ENCODE measurements at regions of chr17 and their contacts with region 1.

Region 1: DNA sequence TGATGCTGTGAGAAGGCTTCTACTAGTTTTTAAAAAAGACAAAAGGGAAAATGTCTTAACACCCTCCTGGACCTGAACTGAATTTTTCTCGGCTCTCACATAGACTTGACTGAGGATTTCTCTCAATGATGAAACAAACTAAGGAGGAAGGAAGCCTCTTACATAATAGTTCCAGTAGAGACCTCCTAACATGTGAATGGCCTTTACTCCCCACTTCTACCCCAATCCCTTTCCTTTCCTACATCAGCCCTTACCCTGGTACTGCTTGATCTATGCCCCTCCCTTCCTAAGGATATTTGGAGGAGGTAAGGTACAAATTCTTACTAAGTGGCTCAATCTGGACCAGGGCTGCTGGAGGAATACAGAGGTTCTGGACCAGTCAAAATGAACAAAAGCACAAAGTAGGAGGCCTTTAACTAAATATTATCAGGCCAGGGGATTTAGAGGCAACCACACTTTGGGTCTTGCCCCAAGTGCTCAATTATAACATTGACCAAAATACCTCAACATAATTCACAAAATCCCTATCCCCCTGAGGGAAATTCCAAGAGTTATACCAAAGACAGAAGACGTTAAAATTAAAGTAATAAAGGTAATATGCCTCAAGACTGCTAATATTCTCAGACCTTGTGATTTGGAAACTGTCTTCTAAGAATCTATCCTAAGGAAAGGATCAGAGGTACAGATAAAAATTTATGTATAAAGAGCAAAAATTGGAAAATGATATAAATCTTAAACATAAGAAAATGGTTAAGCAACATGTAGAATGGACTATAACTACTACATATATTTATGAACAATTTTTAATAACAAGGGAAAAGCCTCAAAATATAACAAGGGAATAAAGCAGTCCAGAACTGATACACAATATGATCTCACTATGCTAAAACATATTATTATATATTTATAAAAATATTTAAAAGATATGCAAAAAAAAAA is 55.1 kb upstream of the MTMR4 start:
- DNase-seq: no peak
- ATAC-seq: no peak
- H3K4me3 ChIP-seq: no peak overlapping the region
- H3K27ac ChIP-seq: no peak overlapping the region
- H3K4me1 ChIP-seq: no peaks in the 10 kb centered on the region
- H3K27me3 ChIP-seq: no peaks in the 10 kb centered on the region
- CTCF ChIP-seq: no peak

Region 2: GRCh38 chr17:58337600-58338453 is 231.7 kb before region 1 on chr17:
- CTCF ChIA-PET with region 1: no interaction called
- POLR2A ChIA-PET with region 1: no interaction called
- intact Hi-C with region 1: no loop called
- DNase-seq: no peak
- ATAC-seq: no peak
- H3K4me3 ChIP-seq: no peak overlapping the region
- H3K27ac ChIP-seq: no peak overlapping the region
- H3K4me1 ChIP-seq: peaks cover 6% of the 10 kb centered on the region; the same call in 1 of the 2 replicates
- H3K27me3 ChIP-seq: no peaks in the 10 kb centered on the region
- CTCF ChIP-seq: no peak

Region 3: DNA sequence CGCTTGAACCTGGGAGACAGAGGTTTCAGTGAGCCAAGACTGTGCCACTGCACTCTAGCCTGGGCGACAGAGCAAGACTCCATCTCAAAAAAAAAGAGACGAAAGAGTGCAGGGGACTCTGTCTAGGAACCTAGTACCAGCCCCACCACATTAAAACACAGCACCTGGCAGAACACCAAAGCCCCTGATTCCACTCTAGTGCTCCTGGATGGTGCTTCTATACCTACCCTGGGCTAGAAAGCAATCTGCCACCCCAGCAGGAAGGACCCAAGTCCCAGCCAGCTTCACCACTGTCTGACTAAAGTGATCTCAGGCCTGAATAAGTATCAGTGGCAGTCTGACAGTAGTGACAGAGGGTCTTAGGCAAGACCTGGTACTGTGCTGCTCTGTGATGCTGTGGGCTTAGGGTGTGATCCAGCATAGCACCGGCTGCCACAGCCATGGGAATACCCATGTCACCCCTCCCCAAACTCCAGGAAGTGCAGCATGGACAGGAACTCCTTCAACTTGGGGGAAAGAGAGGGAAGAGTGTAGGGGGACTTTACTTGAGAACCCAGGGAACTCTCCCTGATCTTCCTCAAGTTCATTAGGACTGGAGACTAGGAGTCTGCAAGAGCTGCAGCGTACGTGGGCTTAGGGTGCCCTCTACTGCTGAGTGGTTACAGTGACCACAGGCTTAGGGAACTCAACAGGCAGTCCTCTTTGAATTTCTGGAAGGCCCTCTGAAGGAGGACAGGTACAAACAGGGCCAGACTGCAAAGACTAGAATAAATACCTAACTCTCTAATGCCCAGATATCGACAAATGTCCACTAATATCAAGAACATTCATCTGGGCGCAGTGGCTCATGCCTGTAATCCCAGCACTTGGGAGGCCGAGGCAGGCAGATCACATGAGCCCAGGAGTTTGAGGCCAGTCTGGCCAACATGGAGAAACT is 122.2 kb before region 1 on chr17:
- CTCF ChIA-PET with region 1: no interaction called
- POLR2A ChIA-PET with region 1: no interaction called
- intact Hi-C with region 1: no loop called
- DNase-seq: peak; percentile 97
- ATAC-seq: peak; percentile 100
- H3K4me3 ChIP-seq: no peak overlapping the region
- H3K27ac ChIP-seq: no peak overlapping the region
- H3K4me1 ChIP-seq: no peaks in the 10 kb centered on the region
- H3K27me3 ChIP-seq: peaks cover 9% of the 10 kb centered on the region; the same call in 1 of the 2 replicates
- CTCF ChIP-seq: peak; percentile 96

Region 4: GRCh38 chr17:58463821-58464220 is 105.7 kb before region 1 on chr17:
- CTCF ChIA-PET with region 1: no interaction called
- POLR2A ChIA-PET with region 1: no interaction called
- intact Hi-C with region 1: no loop called
- DNase-seq: no peak
- ATAC-seq: no peak
- H3K4me3 ChIP-seq: no peak overlapping the region
- H3K27ac ChIP-seq: no peak overlapping the region
- H3K4me1 ChIP-seq: no peaks in the 10 kb centered on the region
- H3K27me3 ChIP-seq: peaks cover 57% of the 10 kb centered on the region
- CTCF ChIP-seq: no peak

Region 5: GRCh38 chr17:58517734-58518609 is 51.5 kb before region 1 on chr17:
- CTCF ChIA-PET with region 1: no interaction called
- POLR2A ChIA-PET with region 1: no interaction called
- intact Hi-C with region 1: no loop called
- DNase-seq: peak; percentile 100
- ATAC-seq: peak; percentile 73
- H3K4me3 ChIP-seq: peak overlapping the region; percentile 83
- H3K27ac ChIP-seq: peak overlapping the region; percentile 63
- H3K4me1 ChIP-seq: peaks cover 24% of the 10 kb centered on the region
- H3K27me3 ChIP-seq: no peaks in the 10 kb centered on the region
- CTCF ChIP-seq: no peak

Region 6: GRCh38 chr17:58541249-58541648 is 28.3 kb before region 1 on chr17:
- CTCF ChIA-PET with region 1: no interaction called
- POLR2A ChIA-PET with region 1: interaction called, 22 read pairs
- intact Hi-C with region 1: no loop called
- DNase-seq: peak; percentile 40
- ATAC-seq: peak; percentile 70
- H3K4me3 ChIP-seq: no peak overlapping the region
- H3K27ac ChIP-seq: no peak overlapping the region
- H3K4me1 ChIP-seq: no peaks in the 10 kb centered on the region
- H3K27me3 ChIP-seq: peaks cover 22% of the 10 kb centered on the region
- CTCF ChIP-seq: peak; percentile 56

Measured in PC-3 (cell line).